PC-9 (cell line): ENCODE measurements at regions of chr6 and their contacts with region 1.

Region 1: DNA sequence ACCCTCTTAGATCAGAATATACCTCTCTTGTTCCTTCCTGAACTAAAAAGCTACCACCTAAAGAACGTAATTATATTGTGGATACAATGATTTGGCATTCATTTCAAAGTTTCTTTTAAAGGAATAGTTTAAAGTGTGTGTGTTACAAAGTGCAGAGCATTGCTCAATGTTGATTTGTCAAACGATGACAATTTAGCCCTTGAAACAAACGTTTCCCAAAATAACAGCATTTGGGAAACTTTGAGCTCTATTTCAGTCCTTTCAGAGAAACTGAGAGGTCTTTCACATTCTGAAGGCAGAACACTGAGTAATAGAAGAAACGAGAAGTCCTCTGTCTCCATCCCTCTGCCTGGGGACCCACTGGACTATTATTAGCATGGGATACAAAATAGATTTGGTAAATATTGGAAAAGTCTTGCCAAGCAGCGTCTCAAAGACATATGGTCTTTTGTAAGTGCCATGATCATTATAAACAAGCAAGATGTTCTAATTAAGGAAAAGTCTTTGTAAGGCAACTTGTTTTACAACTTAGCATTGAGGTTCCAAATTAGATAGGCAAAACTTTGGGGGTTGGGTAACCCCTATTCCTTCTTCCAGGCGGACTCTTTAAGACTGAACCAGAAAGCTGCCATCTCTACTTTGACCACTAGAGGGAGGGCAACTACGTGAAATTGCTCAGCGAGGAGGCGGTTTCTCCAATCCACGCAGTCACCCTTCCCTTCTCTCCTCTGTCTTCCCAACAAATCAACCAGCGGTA is 208.8 kb downstream of the RNF144B start:
- DNase-seq: peak in 1 of 2 experiments; percentile 54
- H3K4me3 ChIP-seq: no peak overlapping the region
- H3K27ac ChIP-seq: no peak overlapping the region
- H3K4me1 ChIP-seq: no peaks in the 10 kb centered on the region
- H3K27me3 ChIP-seq: no peaks in the 10 kb centered on the region
- CTCF ChIP-seq: peak; percentile 95

Region 2: GRCh38 chr6:18823782-18824386 is 227.9 kb after region 1 on chr6:
- CTCF ChIA-PET with region 1: no interaction called
- POLR2A ChIA-PET with region 1: no interaction called
- intact Hi-C with region 1: loop called (anchors 5 kb)
- DNase-seq: peak; percentile 25 to 35
- H3K4me3 ChIP-seq: no peak overlapping the region
- H3K27ac ChIP-seq: no peak overlapping the region
- H3K4me1 ChIP-seq: no peaks in the 10 kb centered on the region
- H3K27me3 ChIP-seq: no peaks in the 10 kb centered on the region
- CTCF ChIP-seq: peak; percentile 82

Region 3: DNA sequence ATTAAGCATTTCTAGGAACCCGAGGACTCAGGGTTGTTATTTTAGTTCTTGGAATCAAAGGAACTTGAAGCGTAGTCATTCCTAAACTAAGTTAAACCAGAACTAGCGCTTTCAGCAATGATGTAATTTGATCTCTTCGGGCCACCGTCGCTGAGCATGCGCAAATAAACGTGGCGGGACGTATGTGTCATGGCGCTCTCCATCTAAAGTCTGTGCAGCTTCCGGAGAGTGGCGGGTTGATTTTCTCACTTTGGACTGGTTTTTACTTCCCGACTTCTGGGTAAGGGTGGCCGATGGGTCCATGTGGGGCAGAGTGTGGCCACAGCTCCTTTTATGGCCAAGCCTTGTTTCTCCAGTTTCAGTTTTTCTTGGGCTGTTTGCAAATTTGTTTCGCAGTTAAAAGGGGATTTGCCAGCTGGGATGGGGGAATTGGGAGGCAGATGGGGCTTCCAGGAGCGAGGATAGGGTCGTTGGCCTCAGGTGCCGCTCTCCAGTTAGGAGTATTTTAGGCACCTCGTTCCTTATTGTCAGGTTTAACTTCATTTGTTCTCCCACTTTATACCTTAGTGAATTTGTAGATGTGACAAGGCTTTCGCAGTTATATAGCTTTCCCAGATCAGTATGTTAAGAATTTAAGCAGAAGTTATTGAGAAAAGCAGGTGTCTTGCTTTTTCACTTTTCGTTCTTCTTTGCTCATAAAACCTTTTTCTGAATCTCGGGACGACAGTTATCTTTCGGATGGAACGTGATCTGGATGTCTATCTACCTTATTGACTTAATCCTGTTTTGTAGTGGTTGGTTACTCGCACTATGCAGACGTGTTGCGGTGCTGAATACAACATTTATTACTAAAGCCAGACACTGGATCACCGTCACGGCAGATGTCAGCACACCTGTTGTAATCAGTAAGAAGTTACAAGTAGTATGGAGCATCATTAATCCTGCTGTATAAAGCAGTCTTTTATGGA is 1938.6 kb after region 1 on chr6 and contains the start of gene CDKAL1:
- CTCF ChIA-PET with region 1: no interaction called
- POLR2A ChIA-PET with region 1: no interaction called
- intact Hi-C with region 1: loop called (anchors 5 kb)
- DNase-seq: peak; percentile 79 to 81
- H3K4me3 ChIP-seq: peak within 1 kb of the TSS; percentile 77
- H3K27ac ChIP-seq: peak within 1 kb of the TSS; percentile 58
- H3K4me1 ChIP-seq: peaks cover 13% of the 10 kb centered on the region
- H3K27me3 ChIP-seq: no peaks in the 10 kb centered on the region
- CTCF ChIP-seq: no peak
- total RNA-seq, gene CDKAL1: 11.5 and 16.1 TPM in 2 replicates